Endothelial cell of umbilical vein (primary cell): ENCODE measurements at regions of chr2 and their contacts with region 1.

Region 1: DNA sequence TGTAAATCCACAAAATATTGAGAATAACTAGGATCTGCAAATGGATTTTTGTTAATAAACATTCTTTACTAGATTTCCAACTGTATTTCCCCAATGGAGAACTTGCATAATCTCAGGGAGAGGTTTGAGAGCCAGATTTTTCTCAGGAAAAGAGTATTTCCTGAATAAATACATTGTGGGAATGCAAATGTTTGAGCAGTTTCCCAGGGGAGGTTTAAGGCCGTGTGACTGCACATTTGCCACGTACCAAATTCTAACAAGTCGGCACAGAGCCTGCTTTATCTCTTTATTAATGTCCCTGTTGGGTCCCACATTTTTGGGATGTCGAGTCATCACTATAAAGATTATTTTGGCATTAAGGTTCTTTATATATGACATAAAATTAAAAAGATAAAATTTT is 27.0 kb downstream of the TFPI start:
- DNase-seq: peak; percentile 89
- H3K4me3 ChIP-seq: no peak overlapping the region
- H3K27ac ChIP-seq: peak overlapping the region; percentile 45
- H3K4me1 ChIP-seq: peaks cover 51% of the 10 kb centered on the region
- H3K27me3 ChIP-seq: no peaks in the 10 kb centered on the region
- CTCF ChIP-seq: no peak
- POLR2A ChIP-seq: peak; percentile 31

Region 2: DNA sequence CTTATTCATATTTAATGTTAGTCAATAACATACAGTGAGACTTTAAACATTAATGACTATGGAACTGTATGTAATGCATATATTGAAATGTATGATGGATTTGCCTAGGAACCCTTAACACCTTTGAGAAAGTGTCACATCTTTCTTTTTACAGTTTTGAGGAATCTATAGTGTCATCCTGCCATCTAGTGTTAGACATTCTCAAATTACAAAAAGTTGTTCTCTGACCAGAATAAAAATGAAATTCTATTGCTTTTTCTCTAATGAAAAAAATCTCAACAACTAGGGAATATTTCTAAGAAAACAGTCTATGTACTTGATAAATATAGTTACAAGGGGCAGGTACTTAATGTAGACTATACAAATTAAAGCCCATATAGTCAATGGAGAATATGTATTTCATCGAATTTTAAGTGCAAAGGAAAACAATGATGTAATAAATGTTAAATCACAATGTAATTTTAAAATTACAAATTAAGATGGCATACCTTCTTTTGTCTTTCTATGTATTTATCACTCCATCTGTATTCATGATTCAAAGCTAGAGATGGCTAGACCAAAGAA is 74.1 kb before region 1 on chr2:
- CTCF ChIA-PET with region 1: no interaction called
- POLR2A ChIA-PET with region 1: no interaction called
- dilution Hi-C with region 1: no loop called
- intact Hi-C with region 1: no loop called
- DNase-seq: peak; percentile 68
- H3K4me3 ChIP-seq: no peak overlapping the region
- H3K27ac ChIP-seq: no peak overlapping the region
- H3K4me1 ChIP-seq: peaks cover 6% of the 10 kb centered on the region
- H3K27me3 ChIP-seq: no peaks in the 10 kb centered on the region
- CTCF ChIP-seq: peak; percentile 10 to 12
- POLR2A ChIP-seq: no peak

Region 3: GRCh38 chr2:187541086-187542085 is 14.1 kb after region 1 on chr2:
- CTCF ChIA-PET with region 1: interaction called, 4 read pairs
- POLR2A ChIA-PET with region 1: no interaction called
- dilution Hi-C with region 1: no loop called
- intact Hi-C with region 1: loop called (anchors 1 kb)
- DNase-seq: peak; percentile 96
- H3K4me3 ChIP-seq: peak overlapping the region in 1 of 3 experiments; percentile 11
- H3K27ac ChIP-seq: peak overlapping the region; percentile 94
- H3K4me1 ChIP-seq: peaks cover 55% of the 10 kb centered on the region
- H3K27me3 ChIP-seq: no peaks in the 10 kb centered on the region
- CTCF ChIP-seq: no peak
- POLR2A ChIP-seq: peak; percentile 81